Activated CD4-positive, alpha-beta T cell treated with anti-CD3 and anti-CD28 coated beads for 36 hours (primary cell): ENCODE measurements at regions of chr13 and their contacts with region 1.

Region 1: DNA sequence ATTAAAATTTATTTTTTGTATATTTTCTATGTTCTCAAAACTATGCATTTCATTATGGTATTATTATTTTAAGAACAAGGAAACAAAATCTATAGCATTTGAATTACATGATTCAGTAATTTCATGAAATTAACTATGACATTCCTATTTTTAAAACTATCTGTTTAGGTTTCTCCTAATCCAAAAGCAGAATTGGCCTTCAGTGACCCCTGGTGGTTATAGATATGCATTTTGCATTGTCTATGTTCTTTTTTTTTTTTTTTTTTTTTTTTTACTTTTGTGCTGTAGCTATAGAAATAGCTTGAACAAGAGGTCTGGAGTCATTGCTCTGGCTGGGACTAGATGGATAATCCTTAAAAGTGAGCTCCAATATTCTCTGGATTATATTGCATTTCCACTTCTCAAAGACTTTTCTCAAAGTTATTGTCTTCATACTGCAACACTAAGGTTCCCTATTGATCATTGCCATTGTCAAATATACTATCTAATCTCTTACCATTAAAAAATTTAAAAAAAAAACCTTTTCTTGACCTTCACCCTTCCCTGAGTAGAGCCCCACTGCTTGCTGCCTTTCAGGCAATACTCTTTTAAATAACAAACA is 15.9 kb upstream of the DNAJC3 start:
- DNase-seq: peak; percentile 21
- ATAC-seq: no peak
- H3K4me3 Mint-ChIP-seq: no peak overlapping the region
- H3K27ac Mint-ChIP-seq: no peak overlapping the region
- H3K4me1 Mint-ChIP-seq: no peaks in the 10 kb centered on the region
- H3K27me3 Mint-ChIP-seq: peaks cover 19% of the 10 kb centered on the region

Region 2: DNA sequence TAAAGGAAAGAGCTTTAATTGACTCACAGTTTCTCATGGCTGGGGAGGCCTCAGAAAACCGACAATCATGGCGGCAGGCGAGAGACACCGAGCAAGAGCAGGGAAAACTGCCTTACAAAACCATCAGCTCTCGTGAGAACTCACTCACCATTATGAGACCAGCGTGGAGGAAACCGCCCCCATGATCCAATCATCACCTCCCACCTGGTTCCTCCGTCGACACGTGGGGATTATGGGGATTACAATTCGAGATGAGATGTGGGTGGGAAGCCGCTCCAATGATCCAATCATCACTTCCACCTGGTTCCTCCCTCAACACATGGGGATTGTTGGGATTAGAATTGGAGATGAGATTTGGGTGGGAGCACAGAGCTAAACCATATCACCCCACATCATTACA is 653.8 kb before region 1 on chr13:
- CTCF ChIA-PET with region 1: no interaction called
- POLR2A ChIA-PET with region 1: no interaction called
- intact Hi-C with region 1: no loop called
- DNase-seq: no peak
- ATAC-seq: no peak
- H3K4me3 Mint-ChIP-seq: no peak overlapping the region
- H3K27ac Mint-ChIP-seq: no peak overlapping the region
- H3K4me1 Mint-ChIP-seq: no peaks in the 10 kb centered on the region
- H3K27me3 Mint-ChIP-seq: peaks cover 11% of the 10 kb centered on the region

Region 3: GRCh38 chr13:95387733-95388207 is 273.3 kb before region 1 on chr13:
- CTCF ChIA-PET with region 1: no interaction called
- POLR2A ChIA-PET with region 1: no interaction called
- intact Hi-C with region 1: no loop called
- DNase-seq: no peak
- ATAC-seq: no peak
- H3K4me3 Mint-ChIP-seq: no peak overlapping the region
- H3K27ac Mint-ChIP-seq: no peak overlapping the region
- H3K4me1 Mint-ChIP-seq: no peaks in the 10 kb centered on the region
- H3K27me3 Mint-ChIP-seq: peaks cover 23% of the 10 kb centered on the region

Region 4: GRCh38 chr13:95494082-95494681 is 166.9 kb before region 1 on chr13:
- CTCF ChIA-PET with region 1: interaction called, 3 read pairs
- POLR2A ChIA-PET with region 1: no interaction called
- intact Hi-C with region 1: loop called in 1 of 2 experiments (anchors 1 kb)
- DNase-seq: no peak
- ATAC-seq: no peak
- H3K4me3 Mint-ChIP-seq: no peak overlapping the region
- H3K27ac Mint-ChIP-seq: no peak overlapping the region
- H3K4me1 Mint-ChIP-seq: no peaks in the 10 kb centered on the region
- H3K27me3 Mint-ChIP-seq: peaks cover 11% of the 10 kb centered on the region

Region 5: DNA sequence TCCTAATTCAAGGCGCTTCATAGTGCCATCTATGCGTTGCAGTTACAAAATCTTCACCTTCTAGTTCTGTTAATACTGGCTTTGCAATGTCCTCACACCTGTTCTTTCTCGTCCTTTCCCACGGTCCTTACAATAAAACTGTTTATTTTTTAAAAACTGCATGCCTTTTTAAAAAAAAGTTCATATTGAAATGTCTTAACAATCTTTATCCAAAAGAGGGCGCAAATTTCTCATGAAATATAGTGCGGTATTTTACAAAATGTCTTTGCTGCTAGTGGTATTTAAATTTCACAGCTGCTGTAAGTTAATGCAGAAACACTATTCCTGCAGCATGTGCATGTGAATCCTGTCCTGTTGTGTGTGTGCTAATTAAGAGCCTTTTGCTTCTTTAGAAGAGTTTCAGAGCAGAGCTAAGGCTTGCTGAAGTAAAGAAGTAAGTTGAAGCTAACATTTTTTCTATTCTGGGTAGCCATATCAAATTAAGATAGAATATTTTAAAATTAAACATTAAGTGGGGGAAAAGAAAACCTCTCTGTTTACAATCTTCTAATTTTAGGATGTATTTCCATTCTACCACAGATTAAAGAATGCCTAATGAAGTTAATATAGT is 124.3 kb before region 1 on chr13:
- CTCF ChIA-PET with region 1: interaction called, 6 read pairs
- POLR2A ChIA-PET with region 1: no interaction called
- intact Hi-C with region 1: loop called (anchors 1 to 5 kb)
- DNase-seq: no peak
- ATAC-seq: no peak
- H3K4me3 Mint-ChIP-seq: no peak overlapping the region
- H3K27ac Mint-ChIP-seq: no peak overlapping the region
- H3K4me1 Mint-ChIP-seq: peaks cover 10% of the 10 kb centered on the region
- H3K27me3 Mint-ChIP-seq: peaks cover 27% of the 10 kb centered on the region

Region 6: DNA sequence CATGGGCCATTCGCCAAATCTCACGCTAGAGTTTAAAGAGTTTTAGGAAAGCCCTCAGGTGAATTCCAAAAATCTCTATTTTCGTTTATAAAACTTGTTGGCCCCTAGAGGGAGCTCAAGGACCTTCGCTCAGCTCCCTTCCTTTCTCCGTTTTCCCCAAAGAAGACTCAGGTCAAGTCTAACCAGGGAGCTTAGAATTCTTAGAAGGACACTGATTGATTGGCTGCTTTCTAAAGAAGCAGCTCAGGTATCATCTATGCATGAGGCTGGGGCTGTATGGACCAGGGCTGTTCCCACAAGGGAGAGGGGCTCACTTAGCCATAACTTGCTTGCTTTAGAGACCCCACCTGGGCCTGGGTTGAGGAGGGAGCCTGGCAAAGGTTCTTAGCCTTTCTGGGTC is 37.1 kb before region 1 on chr13:
- CTCF ChIA-PET with region 1: interaction called, 8 read pairs
- POLR2A ChIA-PET with region 1: no interaction called
- intact Hi-C with region 1: loop called (anchors 1 kb)
- DNase-seq: peak; percentile 32
- ATAC-seq: peak; percentile 49
- H3K4me3 Mint-ChIP-seq: no peak overlapping the region
- H3K27ac Mint-ChIP-seq: no peak overlapping the region
- H3K4me1 Mint-ChIP-seq: no peaks in the 10 kb centered on the region
- H3K27me3 Mint-ChIP-seq: peaks cover 9% of the 10 kb centered on the region